ENCODE measurements at regions of chr9 and their contacts with region 1.

Region 1: GRCh38 chr9:21789541-21790037 is 12.8 kb upstream of the MTAP start:
- DNase-seq: peak in 6 of 9 experiments; percentile 46 to 89 (median 62)
- ATAC-seq: peak; percentile 94
- H3K4me3 ChIP-seq: peak overlapping the region; percentile 18 to 33
- H3K4me3 Mint-ChIP-seq: peak overlapping the region; percentile 80
- H3K27ac ChIP-seq: no peak overlapping the region
- H3K27ac Mint-ChIP-seq: peak overlapping the region; percentile 71
- H3K4me1 ChIP-seq: no peaks in the 10 kb centered on the region
- H3K4me1 Mint-ChIP-seq: no peaks in the 10 kb centered on the region
- H3K27me3 ChIP-seq: no peaks in the 10 kb centered on the region
- H3K27me3 Mint-ChIP-seq: peaks cover 8% of the 10 kb centered on the region
- CTCF ChIP-seq: peak; percentile 86

Region 2: GRCh38 chr9:21317956-21318923 is 471.3 kb before region 1 on chr9:
- CTCF ChIA-PET with region 1: interaction called, 6 read pairs
- POLR2A ChIA-PET with region 1: no interaction called
- intact Hi-C with region 1: loop called in 1 of 2 experiments (anchors 2 kb)
- DNase-seq: peak in 3 of 9 experiments; percentile 29 to 63 (median 55)
- ATAC-seq: peak; percentile 86
- H3K4me3 ChIP-seq: no peak overlapping the region
- H3K4me3 Mint-ChIP-seq: no peak overlapping the region
- H3K27ac ChIP-seq: no peak overlapping the region
- H3K27ac Mint-ChIP-seq: no peak overlapping the region
- H3K4me1 ChIP-seq: no peaks in the 10 kb centered on the region
- H3K4me1 Mint-ChIP-seq: peaks cover 4% of the 10 kb centered on the region
- H3K27me3 ChIP-seq: no peaks in the 10 kb centered on the region
- H3K27me3 Mint-ChIP-seq: no peaks in the 10 kb centered on the region
- CTCF ChIP-seq: peak; percentile 94

Region 3: GRCh38 chr9:21434202-21435014 is 355.2 kb before region 1 on chr9:
- CTCF ChIA-PET with region 1: interaction called, 12 read pairs
- POLR2A ChIA-PET with region 1: no interaction called
- intact Hi-C with region 1: loop called (anchors 1 kb)
- DNase-seq: peak in 6 of 9 experiments; percentile 15 to 69 (median 46)
- ATAC-seq: peak; percentile 42
- H3K4me3 ChIP-seq: no peak overlapping the region
- H3K4me3 Mint-ChIP-seq: no peak overlapping the region
- H3K27ac ChIP-seq: no peak overlapping the region
- H3K27ac Mint-ChIP-seq: no peak overlapping the region
- H3K4me1 ChIP-seq: no peaks in the 10 kb centered on the region
- H3K4me1 Mint-ChIP-seq: peaks cover 2% of the 10 kb centered on the region
- H3K27me3 ChIP-seq: no peaks in the 10 kb centered on the region
- H3K27me3 Mint-ChIP-seq: peaks cover 21% of the 10 kb centered on the region
- CTCF ChIP-seq: peak; percentile 60

Region 4: GRCh38 chr9:21473236-21473635 is 316.4 kb before region 1 on chr9:
- CTCF ChIA-PET with region 1: interaction called, 36 read pairs
- POLR2A ChIA-PET with region 1: no interaction called
- intact Hi-C with region 1: no loop called
- DNase-seq: no peak
- ATAC-seq: no peak
- H3K4me3 ChIP-seq: no peak overlapping the region
- H3K4me3 Mint-ChIP-seq: no peak overlapping the region
- H3K27ac ChIP-seq: no peak overlapping the region
- H3K27ac Mint-ChIP-seq: no peak overlapping the region
- H3K4me1 ChIP-seq: no peaks in the 10 kb centered on the region
- H3K4me1 Mint-ChIP-seq: no peaks in the 10 kb centered on the region
- H3K27me3 ChIP-seq: no peaks in the 10 kb centered on the region
- H3K27me3 Mint-ChIP-seq: peaks cover 8% of the 10 kb centered on the region
- CTCF ChIP-seq: no peak

Region 5: DNA sequence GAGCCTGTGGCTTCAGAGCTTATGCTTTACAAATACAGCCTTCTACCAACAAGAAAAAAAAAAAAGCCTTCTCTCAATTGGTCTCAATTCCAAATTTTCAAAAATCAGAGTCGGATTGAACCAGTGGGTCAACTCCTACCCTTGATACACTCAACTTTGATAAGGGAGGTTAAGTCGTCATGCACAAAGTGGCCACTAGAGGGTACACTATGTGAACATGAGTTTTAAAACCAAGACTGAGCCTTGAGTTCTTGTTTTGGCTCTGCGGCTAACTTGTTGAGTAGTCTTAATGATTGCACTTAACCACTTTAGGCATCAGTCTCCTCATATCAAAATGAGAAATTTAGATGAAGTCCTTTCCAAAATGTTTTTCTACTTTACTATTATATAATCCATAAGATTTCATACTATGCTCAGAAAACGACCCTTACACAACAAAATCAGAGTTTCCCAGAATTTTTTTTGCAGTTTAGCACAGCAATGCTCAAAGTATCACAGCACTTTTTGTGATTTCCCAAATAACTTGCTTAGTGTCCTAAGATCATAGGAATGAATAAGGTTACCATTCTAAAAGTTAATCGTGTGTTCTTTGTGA is 80.0 kb before region 1 on chr9:
- CTCF ChIA-PET with region 1: interaction called, 85 read pairs
- POLR2A ChIA-PET with region 1: no interaction called
- intact Hi-C with region 1: loop called (anchors 1 to 2 kb)
- DNase-seq: peak; percentile 35 to 75 (median 65)
- ATAC-seq: peak; percentile 81
- H3K4me3 ChIP-seq: no peak overlapping the region
- H3K4me3 Mint-ChIP-seq: no peak overlapping the region
- H3K27ac ChIP-seq: no peak overlapping the region
- H3K27ac Mint-ChIP-seq: no peak overlapping the region
- H3K4me1 ChIP-seq: no peaks in the 10 kb centered on the region
- H3K4me1 Mint-ChIP-seq: peaks cover 20% of the 10 kb centered on the region
- H3K27me3 ChIP-seq: no peaks in the 10 kb centered on the region
- H3K27me3 Mint-ChIP-seq: no peaks in the 10 kb centered on the region
- CTCF ChIP-seq: peak; percentile 84

Measured in CD8-positive, alpha-beta T cell (primary cell).